Right cardiac atrium (tissue), 5 donors: ENCODE measurements at regions of chr9 and their contacts with region 1.

Region 1: GRCh38 chr9:14347406-14348122 is 33.6 kb upstream of the NFIB start:
- DNase-seq: peak; percentile 77 to 89 (median 85)
- ATAC-seq: peak; percentile 62 to 72
- H3K4me3 ChIP-seq: peak overlapping the region; percentile 33
- H3K27ac ChIP-seq: peak overlapping the region; percentile 97
- H3K4me1 ChIP-seq: peaks cover 10% of the 10 kb centered on the region
- H3K27me3 ChIP-seq: no peaks in the 10 kb centered on the region

Region 2: DNA sequence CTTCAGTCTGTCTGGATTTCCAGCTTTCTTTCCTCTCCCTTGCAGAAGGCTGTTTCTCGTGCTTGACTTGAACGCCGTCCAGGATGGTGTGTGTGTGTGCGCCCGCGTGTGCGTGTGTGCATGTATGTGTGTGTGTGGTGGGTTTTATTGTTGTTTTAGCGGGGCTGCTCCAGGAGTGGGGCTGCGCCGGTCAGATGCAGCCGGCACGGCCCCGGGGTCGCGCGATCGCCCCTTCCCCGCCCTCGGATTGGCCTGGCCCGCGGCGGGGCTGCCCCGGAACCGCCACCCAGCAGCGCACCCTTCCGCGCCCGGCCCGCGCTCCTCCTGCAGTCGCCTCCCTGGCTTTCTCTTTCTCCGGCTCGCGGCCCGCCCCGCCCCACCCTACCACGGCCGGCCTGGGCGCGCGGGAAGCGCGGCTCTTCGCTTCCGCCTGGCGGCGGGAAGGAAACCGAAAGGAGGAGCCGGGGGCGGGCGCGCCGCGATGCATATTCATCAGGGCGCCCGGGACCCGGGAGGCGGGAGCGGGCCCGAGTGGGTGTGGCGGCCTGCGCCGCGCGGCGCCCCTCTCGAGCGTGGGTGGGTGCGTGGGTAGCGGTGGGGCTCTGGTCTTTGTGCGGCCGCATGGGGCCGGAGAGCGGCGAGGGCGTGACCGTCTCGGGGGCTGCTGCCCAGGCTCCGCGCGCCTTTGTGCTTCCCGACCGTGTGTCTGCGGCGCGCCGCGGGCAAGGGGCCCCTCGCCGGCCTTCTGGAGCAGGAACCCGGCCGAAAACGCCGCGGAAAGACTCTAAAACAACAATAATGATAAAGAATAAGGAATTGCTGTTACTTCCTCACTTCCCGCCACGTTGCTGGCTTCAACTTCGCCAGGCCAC is 25.1 kb before region 1 on chr9:
- intact Hi-C with region 1: loop called in 3 of 4 experiments (anchors 2 to 5 kb)
- DNase-seq: peak; percentile 95 to 98 (median 97)
- ATAC-seq: peak; percentile 97
- H3K4me3 ChIP-seq: peak overlapping the region; percentile 82
- H3K27ac ChIP-seq: peak overlapping the region; percentile 98
- H3K4me1 ChIP-seq: no peaks in the 10 kb centered on the region
- H3K27me3 ChIP-seq: no peaks in the 10 kb centered on the region